HepG2 (cell line): ENCODE measurements at regions of chr1 and their contacts with region 1.

Region 1: GRCh38 chr1:156583821-156584622 is 4.5 kb downstream of the TTC24 start:
- DNase-seq: peak; percentile 40
- ATAC-seq: no peak; the same call in 2 of the 3 replicates
- H3K4me3 ChIP-seq: no peak overlapping the region
- H3K27ac ChIP-seq: no peak overlapping the region
- H3K4me1 ChIP-seq: 0 out of 2 replicates have a peak, but pooled peaks cover 14% of the 10 kb centered on the region
- H3K27me3 ChIP-seq: peaks cover 6 to 39% of the 10 kb centered on the region in 2 experiments; a peak in 4 of 5 replicates
- CTCF ChIP-seq: peak; percentile 76
- EP300 ChIP-seq: no peak
- POLR2A ChIP-seq: no peak
- RAD21 ChIP-seq: no peak

Region 2: GRCh38 chr1:156456622-156457465 is 127.2 kb before region 1 on chr1:
- CTCF ChIA-PET with region 1: interaction called, 7 read pairs
- POLR2A ChIA-PET with region 1: interaction called, 3 read pairs
- in situ Hi-C with region 1: no loop called
- intact Hi-C with region 1: loop called (anchors 1 kb)
- DNase-seq: peak; percentile 96
- ATAC-seq: peak; percentile 91
- H3K4me3 ChIP-seq: peak overlapping the region; percentile 54 to 75 (median 55); a peak in 5 of 6 replicates
- H3K27ac ChIP-seq: peak overlapping the region; percentile 85
- H3K4me1 ChIP-seq: peaks cover 60% of the 10 kb centered on the region
- H3K27me3 ChIP-seq: no peaks in the 10 kb centered on the region
- CTCF ChIP-seq: no peak
- EP300 ChIP-seq: no peak; a peak in 1 of 4 replicates
- POLR2A ChIP-seq: peak; percentile 60 to 64
- RAD21 ChIP-seq: peak; percentile 3; the same call in 1 of the 2 replicates

Region 3: DNA sequence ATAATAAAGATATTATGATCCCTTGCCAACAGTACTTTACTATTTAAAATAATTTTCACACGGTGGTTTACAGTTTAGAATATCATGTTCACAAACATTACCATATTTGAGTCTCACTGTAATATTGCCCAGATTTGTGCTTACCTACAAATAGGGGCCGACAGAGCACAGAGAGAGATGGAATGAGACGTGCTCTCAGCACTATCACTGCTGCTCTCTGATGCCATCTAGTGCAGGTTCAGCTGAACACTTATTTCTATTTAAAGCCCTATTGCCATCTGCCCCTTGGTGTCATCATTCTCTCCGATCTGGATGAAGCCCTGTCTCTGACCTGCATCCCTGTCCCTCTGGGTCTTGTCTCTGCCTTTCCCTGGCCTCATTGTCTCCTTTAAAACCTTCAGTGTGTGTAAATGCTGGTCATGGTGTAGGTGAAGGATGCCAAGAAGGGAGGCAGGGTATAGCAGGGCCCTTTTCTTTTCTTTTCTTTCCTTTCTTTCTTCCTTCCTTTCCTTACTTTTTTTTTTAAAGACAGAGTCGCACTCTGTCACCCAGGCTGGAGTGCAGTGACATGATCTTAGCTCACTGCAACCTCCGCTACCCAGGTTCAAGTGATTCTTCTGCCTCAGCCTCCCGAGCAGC is 24.1 kb after region 1 on chr1:
- CTCF ChIA-PET with region 1: interaction called, 86 read pairs
- POLR2A ChIA-PET with region 1: interaction called, 5 read pairs
- in situ Hi-C with region 1: no loop called
- intact Hi-C with region 1: loop called (anchors 1 kb)
- DNase-seq: peak; percentile 70
- ATAC-seq: peak; percentile 96
- H3K4me3 ChIP-seq: no peak overlapping the region
- H3K27ac ChIP-seq: no peak overlapping the region
- H3K4me1 ChIP-seq: peaks cover 24% of the 10 kb centered on the region
- H3K27me3 ChIP-seq: no peaks in the 10 kb centered on the region; a peak in 1 of 5 replicates
- CTCF ChIP-seq: peak; percentile 86
- EP300 ChIP-seq: no peak
- POLR2A ChIP-seq: no peak
- RAD21 ChIP-seq: peak; percentile 59

Region 4: DNA sequence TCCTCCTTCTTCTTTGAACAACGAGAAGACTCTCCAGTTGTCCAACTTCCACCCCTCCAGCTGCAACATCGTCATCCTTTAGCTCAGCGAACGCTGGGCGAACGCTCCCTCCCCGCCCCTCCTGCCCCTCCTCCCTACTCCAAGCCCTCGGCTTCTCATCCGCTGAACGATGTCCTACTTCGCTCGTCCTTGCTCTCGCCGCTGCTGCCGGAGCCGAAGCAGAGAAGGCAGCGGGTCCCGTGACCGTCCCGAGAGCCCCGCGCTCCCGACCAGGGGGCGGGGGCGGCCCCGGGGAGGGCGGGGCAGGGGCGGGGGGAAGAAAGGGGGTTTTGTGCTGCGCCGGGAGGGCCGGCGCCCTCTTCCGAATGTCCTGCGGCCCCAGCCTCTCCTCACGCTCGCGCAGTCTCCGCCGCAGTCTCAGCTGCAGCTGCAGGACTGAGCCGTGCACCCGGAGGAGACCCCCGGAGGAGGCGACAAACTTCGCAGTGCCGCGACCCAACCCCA is 57.8 kb after region 1 on chr1 and contains the start of gene BCAN:
- CTCF ChIA-PET with region 1: no interaction called
- POLR2A ChIA-PET with region 1: no interaction called
- in situ Hi-C with region 1: no loop called
- intact Hi-C with region 1: no loop called
- DNase-seq: no peak
- ATAC-seq: no peak
- H3K4me3 ChIP-seq: no peak within 1 kb of the TSS
- H3K27ac ChIP-seq: no peak within 1 kb of the TSS
- H3K4me1 ChIP-seq: peaks cover 17% of the 10 kb centered on the region
- H3K27me3 ChIP-seq: peaks cover 2 to 11% of the 10 kb centered on the region in 2 experiments; a peak in 3 of 5 replicates
- CTCF ChIP-seq: no peak
- EP300 ChIP-seq: no peak
- POLR2A ChIP-seq: no peak
- RAD21 ChIP-seq: no peak
- total RNA-seq, gene BCAN: not detected in 2 replicates

Region 5: GRCh38 chr1:157090196-157090647 is 506.2 kb after region 1 on chr1:
- CTCF ChIA-PET with region 1: no interaction called
- POLR2A ChIA-PET with region 1: no interaction called
- in situ Hi-C with region 1: no loop called
- intact Hi-C with region 1: no loop called
- DNase-seq: peak; percentile 64
- ATAC-seq: peak; percentile 94
- H3K4me3 ChIP-seq: no peak overlapping the region
- H3K27ac ChIP-seq: no peak overlapping the region
- H3K4me1 ChIP-seq: peaks cover 12% of the 10 kb centered on the region
- H3K27me3 ChIP-seq: peaks cover 0 to 22% of the 10 kb centered on the region in 2 experiments; a peak in 3 of 5 replicates
- CTCF ChIP-seq: peak; percentile 92
- EP300 ChIP-seq: no peak
- POLR2A ChIP-seq: no peak
- RAD21 ChIP-seq: peak; percentile 86